H1 (cell line): ENCODE measurements at regions of chr22 and their contacts with region 1.

Region 1: DNA sequence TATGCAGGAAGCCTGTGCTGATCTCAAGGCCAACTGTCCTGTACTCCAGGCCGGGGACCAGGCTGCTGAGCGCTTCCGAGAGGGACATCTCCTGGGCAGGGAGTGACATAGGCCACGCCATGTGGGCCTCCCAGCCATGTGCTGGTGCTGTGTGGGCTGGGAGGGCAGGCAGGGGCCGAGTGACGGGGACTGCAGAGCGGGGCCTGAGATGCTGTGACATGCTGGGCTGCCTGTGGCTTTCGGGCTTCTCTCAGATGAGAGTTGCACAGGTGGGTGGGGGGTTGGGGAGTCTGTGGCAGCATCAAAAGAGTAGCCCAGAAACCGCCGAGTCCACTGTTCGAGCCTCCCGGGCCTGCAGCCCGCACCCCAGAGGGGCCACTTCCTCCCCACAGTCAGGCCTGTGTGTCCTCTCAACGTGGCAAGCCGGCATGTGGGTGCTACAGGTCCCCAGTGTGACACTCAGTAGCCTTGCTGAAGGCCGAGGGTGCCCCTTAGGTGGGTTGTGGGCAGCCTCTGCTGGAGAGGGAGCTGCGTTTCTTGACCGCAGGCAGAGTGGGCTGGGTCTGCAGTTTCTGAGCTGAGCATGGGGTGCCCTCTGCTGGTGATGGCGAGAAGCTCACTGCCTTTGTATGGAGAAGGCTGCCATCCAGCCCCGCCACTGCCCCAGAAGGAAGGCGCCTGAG is 101.2 kb downstream of the BCR start:
- DNase-seq: peak; percentile 68 to 95
- H3K4me3 ChIP-seq: no peak overlapping the region
- H3K27ac ChIP-seq: no peak overlapping the region
- H3K4me1 ChIP-seq: peaks cover 0 to 8% (median 1%) of the 10 kb centered on the region in 4 experiments; a peak in 4 of 7 replicates
- H3K27me3 ChIP-seq: no peaks in the 10 kb centered on the region
- CTCF ChIP-seq: peak; percentile 95 to 98 (median 96)
- EP300 ChIP-seq: no peak
- POLR2A ChIP-seq: no peak
- RAD21 ChIP-seq: peak; percentile 96 to 98

Region 2: GRCh38 chr22:23152315-23153113 is 129.0 kb before region 1 on chr22:
- CTCF ChIA-PET with region 1: interaction called, 25 read pairs
- POLR2A ChIA-PET with region 1: interaction called, 3 read pairs
- DNase-seq: no peak
- H3K4me3 ChIP-seq: no peak overlapping the region
- H3K27ac ChIP-seq: no peak overlapping the region
- H3K4me1 ChIP-seq: peaks cover 0 to 27% (median 12%) of the 10 kb centered on the region in 4 experiments; a peak in 5 of 7 replicates
- H3K27me3 ChIP-seq: no peaks in the 10 kb centered on the region; a peak in 1 of 7 replicates
- CTCF ChIP-seq: no peak
- EP300 ChIP-seq: no peak
- POLR2A ChIP-seq: no peak
- RAD21 ChIP-seq: no peak

Region 3: DNA sequence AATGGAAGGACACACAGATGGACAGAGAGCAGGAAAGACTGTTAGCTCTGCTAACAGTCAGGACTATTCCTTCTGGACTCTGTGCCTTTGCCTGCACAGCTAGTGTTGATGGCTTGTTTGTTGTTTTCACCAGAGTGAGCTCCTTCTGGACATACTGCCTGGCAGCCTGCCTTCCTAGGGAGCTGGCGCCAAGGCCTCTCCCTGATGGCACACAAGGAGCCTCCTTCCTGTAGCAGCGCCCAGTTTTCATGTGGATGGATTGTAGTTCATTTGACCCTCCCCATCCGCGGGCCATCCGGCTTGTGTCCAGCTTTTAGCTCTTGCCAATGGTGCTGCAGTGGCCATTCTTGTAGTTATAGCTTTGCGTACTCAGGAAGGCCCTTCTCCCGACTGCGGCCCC is 117.9 kb before region 1 on chr22:
- CTCF ChIA-PET with region 1: interaction called, 249 read pairs
- POLR2A ChIA-PET with region 1: no interaction called
- DNase-seq: no peak
- H3K4me3 ChIP-seq: no peak overlapping the region
- H3K27ac ChIP-seq: no peak overlapping the region
- H3K4me1 ChIP-seq: peaks cover 0 to 12% (median 7%) of the 10 kb centered on the region in 4 experiments; a peak in 5 of 7 replicates
- H3K27me3 ChIP-seq: no peaks in the 10 kb centered on the region
- CTCF ChIP-seq: no peak
- EP300 ChIP-seq: no peak
- POLR2A ChIP-seq: no peak
- RAD21 ChIP-seq: no peak

Region 4: DNA sequence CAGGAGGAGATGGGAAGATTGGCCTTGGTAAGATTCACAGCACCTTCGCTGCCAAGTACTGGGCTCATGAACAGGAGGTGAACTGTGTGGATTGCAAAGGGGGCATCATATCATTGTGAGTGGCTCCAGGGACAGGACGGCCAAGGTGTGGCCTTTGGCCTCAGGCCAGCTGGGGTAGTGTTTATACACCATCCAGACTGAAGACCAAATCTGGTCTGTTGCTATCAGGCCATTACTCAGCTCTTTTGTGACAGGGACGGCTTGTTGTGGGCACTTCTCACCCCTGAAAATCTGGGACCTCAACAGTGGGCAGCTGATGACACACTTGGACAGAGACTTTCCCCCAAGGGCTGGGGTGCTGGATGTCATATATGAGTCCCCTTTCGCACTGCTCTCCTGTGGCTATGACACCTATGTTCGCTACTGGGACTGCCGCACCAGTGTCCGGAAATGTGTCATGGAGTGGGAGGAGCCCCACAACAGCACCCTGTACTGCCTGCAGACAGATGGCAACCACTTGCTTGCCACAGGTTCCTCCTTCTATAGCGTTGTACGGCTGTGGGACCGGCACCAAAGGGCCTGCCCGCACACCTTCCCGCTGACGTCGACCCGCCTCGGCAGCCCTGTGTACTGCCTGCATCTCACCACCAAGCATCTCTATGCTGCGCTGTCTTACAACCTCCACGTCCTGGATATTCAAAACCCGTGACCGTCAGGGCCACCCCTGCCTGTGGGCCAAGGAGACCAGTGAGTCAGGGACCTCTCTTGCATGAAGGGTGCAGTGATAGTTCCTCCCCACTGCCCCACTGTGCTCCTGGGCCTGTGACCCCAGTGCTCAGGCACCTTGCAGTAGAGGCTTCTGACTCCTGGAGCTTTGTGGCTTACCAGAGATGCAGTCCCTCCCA is 17.6 kb before region 1 on chr22:
- CTCF ChIA-PET with region 1: interaction called, 97 read pairs
- POLR2A ChIA-PET with region 1: interaction called, 3 read pairs
- DNase-seq: no peak
- H3K4me3 ChIP-seq: no peak overlapping the region
- H3K27ac ChIP-seq: no peak overlapping the region
- H3K4me1 ChIP-seq: peaks cover 5 to 26% (median 13%) of the 10 kb centered on the region in 4 experiments
- H3K27me3 ChIP-seq: no peaks in the 10 kb centered on the region
- CTCF ChIP-seq: no peak
- EP300 ChIP-seq: no peak
- POLR2A ChIP-seq: no peak
- RAD21 ChIP-seq: no peak

Region 5: GRCh38 chr22:23322547-23322946 is 41.0 kb after region 1 on chr22:
- CTCF ChIA-PET with region 1: no interaction called
- POLR2A ChIA-PET with region 1: no interaction called
- DNase-seq: peak in 1 of 2 experiments; percentile 17
- H3K4me3 ChIP-seq: no peak overlapping the region
- H3K27ac ChIP-seq: no peak overlapping the region
- H3K4me1 ChIP-seq: peaks cover 0 to 3% (median 0%) of the 10 kb centered on the region in 4 experiments; a peak in 1 of 7 replicates
- H3K27me3 ChIP-seq: no peaks in the 10 kb centered on the region
- CTCF ChIP-seq: peak; percentile 36 to 57 (median 36)
- EP300 ChIP-seq: no peak
- POLR2A ChIP-seq: no peak
- RAD21 ChIP-seq: peak; percentile 48 to 66

Region 6: DNA sequence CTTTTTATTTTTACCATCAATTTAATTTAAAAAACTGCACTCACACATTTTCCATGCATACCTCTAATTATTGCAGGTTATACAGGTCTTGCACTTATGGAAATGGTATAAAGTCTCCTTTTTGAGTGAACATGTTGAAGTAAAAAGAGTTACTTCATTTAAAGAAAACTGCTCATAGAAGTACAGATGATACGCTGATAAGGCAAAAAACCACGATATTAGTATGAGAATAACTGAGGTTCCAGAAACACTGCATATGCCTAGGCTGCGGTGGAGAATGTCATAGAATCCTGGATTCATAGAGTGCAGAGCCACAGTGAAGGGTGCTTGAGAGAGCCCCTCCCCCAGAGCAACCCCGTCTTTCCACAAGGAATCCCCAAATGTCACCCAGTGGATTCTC is 74.5 kb after region 1 on chr22:
- CTCF ChIA-PET with region 1: no interaction called
- POLR2A ChIA-PET with region 1: no interaction called
- DNase-seq: no peak
- H3K4me3 ChIP-seq: no peak overlapping the region
- H3K27ac ChIP-seq: no peak overlapping the region
- H3K4me1 ChIP-seq: no peaks in the 10 kb centered on the region
- H3K27me3 ChIP-seq: peaks cover 17 to 54% (median 38%) of the 10 kb centered on the region in 4 experiments
- CTCF ChIP-seq: no peak
- EP300 ChIP-seq: no peak
- POLR2A ChIP-seq: no peak
- RAD21 ChIP-seq: no peak